Posterior vena cava (tissue), 2 donors: ENCODE measurements at regions of chr4 and their contacts with region 1.

Region 1: DNA sequence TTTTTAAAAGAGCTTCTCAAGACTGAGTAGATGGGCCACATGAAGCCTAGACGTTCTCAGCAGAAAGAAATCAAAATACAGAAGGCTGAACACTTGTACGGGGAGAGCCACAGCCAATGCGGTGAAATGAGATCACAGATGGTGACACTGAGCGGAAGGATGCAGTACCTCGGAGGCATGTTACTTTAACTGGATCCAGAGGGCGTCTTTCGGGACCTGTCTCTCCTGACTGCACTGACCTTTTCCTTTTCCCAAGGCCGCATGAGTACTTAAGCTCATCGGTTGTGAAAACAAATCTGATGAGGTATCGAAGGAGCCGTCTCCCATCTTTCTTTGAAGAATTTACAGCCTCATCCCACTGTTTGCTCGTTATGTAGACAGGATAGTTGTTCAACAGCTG is 32.6 kb downstream of the BEND4 start:
- DNase-seq: no peak

Region 2: DNA sequence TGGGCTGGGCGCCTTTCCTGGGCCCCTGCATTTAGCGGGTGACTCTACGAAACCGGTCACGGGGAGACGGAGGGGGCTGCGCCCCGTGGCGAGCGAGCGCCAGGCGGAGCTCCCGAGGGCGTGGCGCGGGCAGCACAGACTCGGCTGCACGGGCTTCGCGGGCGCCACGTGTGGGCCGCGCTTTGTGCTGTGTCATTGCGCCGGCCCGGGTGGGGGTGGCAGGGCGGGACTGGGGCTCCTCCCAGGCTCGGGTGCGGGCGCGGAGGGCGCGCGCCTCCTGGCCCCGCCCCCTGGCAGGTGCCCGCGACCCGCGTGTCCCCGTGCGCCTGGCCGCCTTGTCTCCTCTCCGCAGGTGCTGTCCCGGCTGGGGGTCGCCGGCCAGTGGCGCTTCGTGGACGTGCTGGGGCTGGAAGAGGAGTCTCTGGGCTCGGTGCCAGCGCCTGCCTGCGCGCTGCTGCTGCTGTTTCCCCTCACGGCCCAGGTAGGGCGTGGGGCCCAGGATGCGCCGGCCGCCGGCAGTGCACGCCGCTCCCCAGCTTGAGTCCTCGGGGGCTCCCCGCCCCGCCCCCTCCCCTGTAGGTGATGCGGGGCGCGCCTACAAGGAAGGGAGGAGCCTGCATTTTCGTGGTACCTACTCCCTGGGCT is 862.5 kb before region 1 on chr4:
- intact Hi-C with region 1: loop called in 1 of 2 experiments (anchors 5 kb)
- DNase-seq: peak; percentile 84

Region 3: GRCh38 chr4:41363384-41363981 is 756.4 kb before region 1 on chr4:
- intact Hi-C with region 1: no loop called
- DNase-seq: peak; percentile 80